ENCODE measurements at regions of chr2 and their contacts with region 1.

Region 1: GRCh38 chr2:196263181-196263747 is 91.9 kb upstream of the STK17B start:
- DNase-seq: peak in 1 of 2 donors; percentile 86
- ATAC-seq: peak; percentile 94 to 99 (median 95)
- H3K4me3 ChIP-seq: no peak overlapping the region
- H3K4me3 Mint-ChIP-seq: peak overlapping the region; percentile 83
- H3K27ac ChIP-seq: peak overlapping the region; percentile 83
- H3K27ac Mint-ChIP-seq: peak overlapping the region; percentile 90 to 92
- H3K4me1 ChIP-seq: peaks cover 11% of the 10 kb centered on the region
- H3K4me1 Mint-ChIP-seq: peaks cover 40 to 41% of the 10 kb centered on the region in 2 donors
- H3K27me3 ChIP-seq: no peaks in the 10 kb centered on the region
- H3K27me3 Mint-ChIP-seq: no peaks in the 10 kb centered on the region
- CTCF ChIP-seq: no peak

Region 2: GRCh38 chr2:196213252-196213980 is 49.8 kb before region 1 on chr2:
- intact Hi-C with region 1: loop called (anchors 5 kb)
- DNase-seq: peak in 1 of 2 donors; percentile 70
- ATAC-seq: no peak
- H3K4me3 ChIP-seq: no peak overlapping the region
- H3K4me3 Mint-ChIP-seq: no peak overlapping the region
- H3K27ac ChIP-seq: no peak overlapping the region
- H3K27ac Mint-ChIP-seq: peak overlapping the region; percentile 86 to 93
- H3K4me1 ChIP-seq: peaks cover 20% of the 10 kb centered on the region
- H3K4me1 Mint-ChIP-seq: peaks cover 32 to 35% of the 10 kb centered on the region in 2 donors
- H3K27me3 ChIP-seq: no peaks in the 10 kb centered on the region
- H3K27me3 Mint-ChIP-seq: no peaks in the 10 kb centered on the region
- CTCF ChIP-seq: no peak

Measured in natural killer cell (primary cell).